Psoas muscle (tissue), 8 donors: ENCODE measurements at regions of chr6 and their contacts with region 1.

Region 1: DNA sequence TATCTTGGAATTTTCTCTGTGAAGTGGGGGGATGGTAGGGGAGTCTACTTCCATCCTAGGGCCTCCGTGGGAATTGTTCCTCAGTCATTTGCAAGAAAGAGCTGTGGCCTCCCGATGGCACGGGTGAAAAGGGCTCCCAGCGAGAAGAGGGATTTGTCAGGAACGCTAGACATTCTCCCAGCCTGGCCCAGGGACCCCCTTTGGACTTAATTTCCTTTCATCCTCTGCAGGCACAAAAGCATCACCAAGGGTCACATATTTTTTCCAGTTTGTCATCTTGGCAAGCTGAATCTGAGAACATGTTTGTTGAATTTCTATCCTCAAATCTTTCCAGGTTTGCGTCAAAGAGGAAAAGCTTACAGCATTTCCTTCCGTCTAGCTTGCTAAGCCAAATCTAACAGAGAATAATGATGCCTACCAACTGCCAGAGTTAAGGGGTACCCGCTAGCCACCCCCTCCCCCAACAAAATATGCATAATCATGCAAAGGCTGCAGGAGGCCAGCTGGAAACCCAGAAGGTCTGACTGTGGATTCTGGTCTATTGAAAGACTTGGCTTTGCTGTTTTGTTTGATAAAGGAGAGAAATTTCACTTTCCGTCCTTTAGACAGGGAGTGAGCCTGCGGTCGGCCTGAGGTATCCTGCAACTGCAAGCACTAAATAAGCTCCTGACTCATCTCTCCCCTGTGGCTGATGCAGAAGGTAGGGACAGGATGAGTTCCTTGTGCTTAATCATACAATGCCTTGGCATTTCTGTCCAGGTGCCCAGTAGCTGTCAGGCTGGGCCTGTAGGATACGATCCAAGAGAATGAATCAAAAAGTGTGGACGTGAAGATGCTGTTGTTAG is 23.1 kb downstream of the PSMG4 start:
- DNase-seq: peak in 1 of 2 donors; percentile 41
- ATAC-seq: peak; percentile 78 to 94 (median 88)
- H3K4me3 ChIP-seq: no peak overlapping the region
- H3K27ac ChIP-seq: peak overlapping the region; percentile 74
- H3K4me1 ChIP-seq: peaks cover 42% of the 10 kb centered on the region
- H3K27me3 ChIP-seq: no peaks in the 10 kb centered on the region
- CTCF ChIP-seq: no peak

Region 2: GRCh38 chr6:3351105-3351676 is 69.3 kb after region 1 on chr6:
- intact Hi-C with region 1: loop called in 1 of 2 experiments (anchors 5 kb)
- DNase-seq: no peak
- ATAC-seq: no peak
- H3K4me3 ChIP-seq: no peak overlapping the region
- H3K27ac ChIP-seq: peak overlapping the region; percentile 31
- H3K4me1 ChIP-seq: peaks cover 44% of the 10 kb centered on the region
- H3K27me3 ChIP-seq: no peaks in the 10 kb centered on the region
- CTCF ChIP-seq: no peak

Region 3: DNA sequence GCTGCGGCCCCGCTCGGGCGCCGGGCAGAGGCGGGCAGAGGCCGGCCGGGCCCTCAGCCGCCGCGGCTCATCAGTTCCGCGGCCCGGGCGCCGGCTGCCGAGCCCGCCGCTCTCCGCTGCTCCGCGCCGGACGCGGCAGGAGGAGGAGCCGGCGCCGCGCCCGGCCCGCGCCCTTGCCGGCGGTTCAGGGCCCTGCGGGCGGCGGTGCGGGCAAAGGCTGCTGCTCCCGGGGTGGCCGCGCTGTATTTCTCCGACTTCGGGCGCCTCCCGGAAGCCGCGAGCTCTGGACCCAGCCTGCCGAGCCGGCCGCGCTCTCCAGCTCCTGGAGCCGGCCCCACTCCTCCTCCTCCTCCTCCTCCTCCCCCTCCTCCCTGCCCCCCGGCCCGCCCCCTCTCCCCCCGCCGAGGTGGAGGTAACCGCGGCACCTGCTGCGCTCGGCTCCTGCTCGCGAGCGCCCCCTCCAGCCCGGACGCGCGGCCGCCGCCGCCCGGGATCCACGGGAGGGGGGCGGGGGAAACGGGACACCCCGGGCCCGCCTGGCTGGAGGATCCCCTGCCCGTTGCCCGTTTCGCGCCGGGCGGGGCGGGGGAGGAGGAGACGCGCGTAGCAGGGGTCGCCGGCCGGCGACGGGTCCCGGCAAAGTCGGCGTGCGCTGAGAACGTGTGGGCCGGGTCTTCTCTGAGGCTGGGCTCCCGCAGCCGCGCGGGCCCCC is 175.1 kb after region 1 on chr6 and contains the start of gene SLC22A23:
- intact Hi-C with region 1: loop called (anchors 2 to 5 kb)
- DNase-seq: peak; percentile 76 to 88
- ATAC-seq: peak; percentile 90 to 92 (median 90)
- H3K4me3 ChIP-seq: peak within 1 kb of the TSS; percentile 78
- H3K27ac ChIP-seq: peak within 1 kb of the TSS; percentile 80
- H3K4me1 ChIP-seq: peaks cover 7% of the 10 kb centered on the region
- H3K27me3 ChIP-seq: no peaks in the 10 kb centered on the region
- CTCF ChIP-seq: peak; percentile 74
- total RNA-seq, gene SLC22A23: 8.7 to 13.7 (median 13.2) TPM

Region 4: DNA sequence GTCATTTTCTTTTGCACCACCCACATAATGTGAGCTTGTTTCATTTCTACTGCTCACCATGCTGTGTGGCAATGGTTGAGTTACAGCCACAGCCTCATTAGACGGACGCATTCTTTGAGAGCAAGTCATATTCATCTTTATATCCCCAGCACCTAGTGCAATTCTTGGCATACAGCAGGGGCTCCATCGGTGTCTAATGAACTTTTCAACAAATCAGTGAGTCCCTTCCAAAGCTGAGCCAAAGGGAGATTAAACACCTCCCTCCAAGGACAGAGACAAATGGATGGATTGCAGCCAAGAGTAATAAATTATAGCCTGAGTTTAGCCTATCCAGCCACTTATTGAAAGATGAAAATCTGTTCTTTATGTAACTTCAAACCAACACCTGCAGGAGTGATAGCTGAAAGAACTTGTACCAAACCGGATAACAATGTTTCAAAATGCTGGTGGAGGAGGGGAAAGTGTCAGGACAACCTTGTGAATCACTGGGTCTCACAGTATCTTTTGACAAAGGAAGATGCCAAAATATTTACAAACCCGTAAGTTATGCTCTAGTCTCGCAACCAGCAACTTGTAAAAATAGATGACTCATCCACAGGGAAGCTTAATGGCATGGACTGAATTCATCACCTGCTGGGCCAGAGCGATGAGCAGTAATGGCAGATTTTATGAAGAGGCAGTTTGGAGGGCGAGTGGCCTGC is 330.6 kb after region 1 on chr6:
- intact Hi-C with region 1: loop called in 1 of 2 experiments (anchors 10 kb)
- DNase-seq: no peak
- ATAC-seq: peak; percentile 90 to 95 (median 92)
- H3K4me3 ChIP-seq: no peak overlapping the region
- H3K27ac ChIP-seq: peak overlapping the region; percentile 59
- H3K4me1 ChIP-seq: no peaks in the 10 kb centered on the region
- H3K27me3 ChIP-seq: no peaks in the 10 kb centered on the region
- CTCF ChIP-seq: no peak

Region 5: GRCh38 chr6:3990692-3991501 is 709.0 kb after region 1 on chr6:
- intact Hi-C with region 1: loop called (anchors 5 to 10 kb)
- DNase-seq: peak; percentile 85 to 91
- ATAC-seq: peak; percentile 92 to 98 (median 95)
- H3K4me3 ChIP-seq: peak overlapping the region; percentile 63
- H3K27ac ChIP-seq: peak overlapping the region; percentile 53
- H3K4me1 ChIP-seq: peaks cover 17% of the 10 kb centered on the region
- H3K27me3 ChIP-seq: no peaks in the 10 kb centered on the region
- CTCF ChIP-seq: peak; percentile 72